Motor neuron (in vitro differentiated cells): ENCODE measurements at regions of chr4 and their contacts with region 1.

Region 1: GRCh38 chr4:69881173-69881773 is 21.3 kb upstream of the SULT1E1 start:
- ATAC-seq: peak in 5 of 8 experiments; percentile 50 to 85 (median 58)
- H3K4me3 ChIP-seq: no peak overlapping the region
- H3K27ac ChIP-seq: no peak overlapping the region
- H3K4me1 ChIP-seq: no peaks in the 10 kb centered on the region

Region 2: GRCh38 chr4:69697536-69698242 is 183.6 kb before region 1 on chr4:
- in situ Hi-C with region 1: loop called in 5 of 9 experiments (anchors 10 to 25 kb)
- ATAC-seq: peak in 2 of 8 experiments; percentile 46 to 59
- H3K4me3 ChIP-seq: no peak overlapping the region
- H3K27ac ChIP-seq: no peak overlapping the region
- H3K4me1 ChIP-seq: no peaks in the 10 kb centered on the region

Region 3: GRCh38 chr4:70183168-70183939 is 302.1 kb after region 1 on chr4:
- in situ Hi-C with region 1: loop called in 1 of 9 experiments (anchors 25 kb)
- ATAC-seq: peak in 3 of 8 experiments; percentile 59 to 80 (median 75)
- H3K4me3 ChIP-seq: no peak overlapping the region
- H3K27ac ChIP-seq: no peak overlapping the region
- H3K4me1 ChIP-seq: no peaks in the 10 kb centered on the region

Region 4: GRCh38 chr4:70236125-70236524 is 354.9 kb after region 1 on chr4:
- in situ Hi-C with region 1: no loop called
- ATAC-seq: no peak
- H3K4me3 ChIP-seq: no peak overlapping the region
- H3K27ac ChIP-seq: no peak overlapping the region
- H3K4me1 ChIP-seq: no peaks in the 10 kb centered on the region

Region 5: GRCh38 chr4:70505151-70505748 is 624.0 kb after region 1 on chr4:
- in situ Hi-C with region 1: loop called in 3 of 9 experiments (anchors 25 kb)
- ATAC-seq: peak in 4 of 8 experiments; percentile 58 to 81 (median 76)
- H3K4me3 ChIP-seq: no peak overlapping the region
- H3K27ac ChIP-seq: no peak overlapping the region
- H3K4me1 ChIP-seq: no peaks in the 10 kb centered on the region